H1 (cell line): ENCODE measurements at regions of chr9 and their contacts with region 1.

Region 1: DNA sequence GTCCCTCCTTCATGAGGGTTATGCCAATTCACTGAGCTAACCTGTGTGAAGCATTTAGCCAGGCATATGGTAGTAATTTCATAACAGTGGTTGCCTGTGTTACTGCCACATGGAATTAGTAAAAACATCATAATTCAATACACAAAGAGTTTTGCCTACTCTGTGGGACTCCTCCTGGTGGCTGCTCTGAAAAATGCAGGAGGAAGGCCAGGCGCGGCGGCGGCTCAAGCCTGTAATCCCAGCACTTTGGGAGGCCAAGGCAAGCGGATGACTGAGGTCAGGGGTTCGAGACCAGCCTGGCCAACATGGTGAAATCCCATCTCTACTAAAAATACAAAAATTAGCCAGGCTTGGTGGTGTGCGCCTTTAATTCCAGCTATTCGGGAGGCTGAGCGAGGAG is 547.3 kb downstream of the CDK5RAP2 start:
- DNase-seq: peak in 1 of 2 experiments; percentile 66
- H3K4me3 ChIP-seq: no peak overlapping the region
- H3K27ac ChIP-seq: no peak overlapping the region
- H3K4me1 ChIP-seq: peaks cover 0 to 5% (median 3%) of the 10 kb centered on the region in 4 experiments; a peak in 2 of 7 replicates
- H3K27me3 ChIP-seq: no peaks in the 10 kb centered on the region
- CTCF ChIP-seq: peak; percentile 41 to 59 (median 53)
- EP300 ChIP-seq: no peak
- POLR2A ChIP-seq: no peak
- RAD21 ChIP-seq: peak; percentile 41 to 56

Region 2: GRCh38 chr9:119884438-119884837 is 148.2 kb before region 1 on chr9:
- CTCF ChIA-PET with region 1: no interaction called
- POLR2A ChIA-PET with region 1: no interaction called
- DNase-seq: peak in 1 of 2 experiments; percentile 7
- H3K4me3 ChIP-seq: no peak overlapping the region
- H3K27ac ChIP-seq: no peak overlapping the region
- H3K4me1 ChIP-seq: peaks cover 2 to 4% (median 3%) of the 10 kb centered on the region in 4 experiments; a peak in 6 of 7 replicates
- H3K27me3 ChIP-seq: no peaks in the 10 kb centered on the region
- CTCF ChIP-seq: no peak
- EP300 ChIP-seq: no peak
- POLR2A ChIP-seq: no peak
- RAD21 ChIP-seq: no peak

Region 3: DNA sequence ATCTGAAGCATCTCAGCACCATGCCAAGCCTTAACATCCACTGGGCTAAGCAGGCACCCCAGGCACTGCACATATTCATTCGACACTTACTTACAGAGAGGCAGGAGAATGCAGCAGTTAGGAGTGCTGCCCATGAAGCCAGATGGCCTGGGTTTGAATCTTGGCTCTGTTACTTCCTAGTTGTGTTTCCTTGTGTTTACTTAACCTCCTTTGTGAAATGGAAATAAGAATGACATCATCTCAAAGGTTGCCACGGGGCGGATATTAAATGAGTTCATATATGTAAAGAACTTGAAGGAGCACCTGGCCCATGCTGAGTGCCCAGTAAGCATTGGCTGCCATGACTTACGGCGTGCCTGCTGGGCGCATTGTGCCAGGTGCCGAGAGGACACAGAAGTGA is 17.8 kb before region 1 on chr9:
- CTCF ChIA-PET with region 1: interaction called, 16 read pairs
- POLR2A ChIA-PET with region 1: no interaction called
- DNase-seq: no peak
- H3K4me3 ChIP-seq: no peak overlapping the region
- H3K27ac ChIP-seq: no peak overlapping the region
- H3K4me1 ChIP-seq: no peaks in the 10 kb centered on the region
- H3K27me3 ChIP-seq: no peaks in the 10 kb centered on the region
- CTCF ChIP-seq: no peak
- EP300 ChIP-seq: no peak
- POLR2A ChIP-seq: no peak
- RAD21 ChIP-seq: no peak

Region 4: GRCh38 chr9:120043448-120043847 is 10.8 kb after region 1 on chr9:
- CTCF ChIA-PET with region 1: interaction called, 12 read pairs
- POLR2A ChIA-PET with region 1: no interaction called
- DNase-seq: no peak
- H3K4me3 ChIP-seq: no peak overlapping the region
- H3K27ac ChIP-seq: no peak overlapping the region
- H3K4me1 ChIP-seq: peaks cover 0 to 10% (median 7%) of the 10 kb centered on the region in 4 experiments; a peak in 4 of 7 replicates
- H3K27me3 ChIP-seq: no peaks in the 10 kb centered on the region
- CTCF ChIP-seq: no peak
- EP300 ChIP-seq: no peak
- POLR2A ChIP-seq: no peak
- RAD21 ChIP-seq: no peak